WTC11 (cell line): ENCODE measurements at regions of chr19 and their contacts with region 1.

Region 1: DNA sequence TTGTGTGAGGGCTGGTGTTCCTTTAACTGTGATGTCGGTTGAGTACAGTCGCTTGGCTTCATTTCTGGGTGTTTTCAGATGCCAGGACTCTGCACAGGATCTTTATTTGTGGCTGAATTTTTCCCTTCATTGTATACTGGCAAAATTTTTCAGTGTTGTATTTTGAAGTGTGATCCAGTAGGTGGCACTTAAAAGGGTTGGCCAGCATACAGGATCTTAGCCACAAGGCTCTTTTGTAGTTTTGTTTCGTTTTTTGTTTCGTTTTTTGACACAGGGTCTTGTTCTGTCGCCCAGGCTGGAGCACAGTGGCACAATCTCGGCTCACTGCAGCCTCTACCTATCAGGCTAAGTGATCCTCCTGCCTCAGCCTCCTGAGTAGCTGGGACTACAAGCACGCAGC is 8.7 kb downstream of the FCAR start:
- DNase-seq: no peak
- ATAC-seq: no peak
- H3K4me3 Mint-ChIP-seq: no peak overlapping the region
- H3K27ac Mint-ChIP-seq: no peak overlapping the region
- H3K4me1 Mint-ChIP-seq: peaks cover 26% of the 10 kb centered on the region
- H3K27me3 Mint-ChIP-seq: peaks cover 18% of the 10 kb centered on the region
- CTCF ChIP-seq: no peak

Region 2: DNA sequence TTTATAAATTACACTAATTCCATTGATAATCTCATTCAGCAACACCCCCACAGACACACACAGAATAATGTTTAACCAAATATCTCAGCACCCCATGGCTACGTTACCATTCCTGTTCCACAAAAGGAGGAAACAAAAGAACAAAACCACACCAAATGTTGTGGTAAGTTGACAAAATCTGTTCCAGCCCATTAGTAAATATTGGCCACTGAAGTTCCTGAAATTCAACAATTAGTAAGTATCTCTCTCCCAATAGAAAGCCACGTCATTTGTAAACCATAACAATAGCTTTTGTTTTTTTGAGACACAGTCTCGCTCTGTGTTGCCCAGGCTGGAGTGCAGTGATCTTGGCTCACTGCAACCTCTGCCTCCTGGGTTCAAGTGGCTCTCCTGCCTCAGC is 11.1 kb before region 1 on chr19:
- CTCF ChIA-PET with region 1: interaction called, 11 read pairs
- POLR2A ChIA-PET with region 1: no interaction called
- DNase-seq: no peak
- ATAC-seq: no peak
- H3K4me3 Mint-ChIP-seq: no peak overlapping the region
- H3K27ac Mint-ChIP-seq: no peak overlapping the region
- H3K4me1 Mint-ChIP-seq: peaks cover 18% of the 10 kb centered on the region
- H3K27me3 Mint-ChIP-seq: peaks cover 16% of the 10 kb centered on the region
- CTCF ChIP-seq: no peak

Region 3: DNA sequence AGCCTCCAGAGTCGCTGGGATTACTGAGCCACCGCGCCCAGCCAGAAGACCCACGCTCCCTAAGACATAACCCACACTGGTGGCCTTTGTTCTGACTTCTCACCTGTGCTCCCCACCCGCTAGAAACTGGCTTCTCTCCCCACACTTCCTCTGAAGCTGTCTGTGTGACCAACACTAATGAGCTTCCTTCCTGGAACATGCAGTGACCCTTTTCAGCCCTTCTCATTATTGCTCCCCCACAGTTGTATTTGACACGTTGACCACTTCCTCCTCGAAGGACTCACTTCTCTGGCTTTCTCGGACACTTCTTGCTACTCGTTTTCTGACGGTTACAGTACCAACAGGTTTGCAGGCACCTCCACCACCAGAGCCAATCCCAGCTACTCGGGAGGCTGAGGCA is 34.1 kb after region 1 on chr19:
- CTCF ChIA-PET with region 1: interaction called, 166 read pairs
- POLR2A ChIA-PET with region 1: no interaction called
- DNase-seq: no peak
- ATAC-seq: no peak
- H3K4me3 Mint-ChIP-seq: no peak overlapping the region
- H3K27ac Mint-ChIP-seq: peak overlapping the region; percentile 11; the same call in 1 of the 2 replicates
- H3K4me1 Mint-ChIP-seq: peaks cover 9% of the 10 kb centered on the region
- H3K27me3 Mint-ChIP-seq: no peaks in the 10 kb centered on the region
- CTCF ChIP-seq: no peak

Region 4: GRCh38 chr19:55005684-55006488 is 123.1 kb after region 1 on chr19:
- CTCF ChIA-PET with region 1: interaction called, 12 read pairs
- POLR2A ChIA-PET with region 1: no interaction called
- DNase-seq: no peak
- ATAC-seq: no peak
- H3K4me3 Mint-ChIP-seq: peak overlapping the region; percentile 63
- H3K27ac Mint-ChIP-seq: peak overlapping the region; percentile 80
- H3K4me1 Mint-ChIP-seq: peaks cover 69% of the 10 kb centered on the region
- H3K27me3 Mint-ChIP-seq: peaks cover 13% of the 10 kb centered on the region
- CTCF ChIP-seq: no peak

Region 5: GRCh38 chr19:55062734-55063492 is 180.2 kb after region 1 on chr19 and contains the start of gene RDH13:
- CTCF ChIA-PET with region 1: interaction called, 31 read pairs
- POLR2A ChIA-PET with region 1: no interaction called
- DNase-seq: peak; percentile 99
- ATAC-seq: peak; percentile 98
- H3K4me3 Mint-ChIP-seq: peak within 1 kb of the TSS; percentile 97
- H3K27ac Mint-ChIP-seq: no peak within 1 kb of the TSS
- H3K4me1 Mint-ChIP-seq: peaks cover 17% of the 10 kb centered on the region
- H3K27me3 Mint-ChIP-seq: peaks cover 46% of the 10 kb centered on the region
- CTCF ChIP-seq: no peak
- total RNA-seq, gene RDH13: 35.3 to 39.5 TPM (median 38.4 TPM) in 3 replicates

Region 6: DNA sequence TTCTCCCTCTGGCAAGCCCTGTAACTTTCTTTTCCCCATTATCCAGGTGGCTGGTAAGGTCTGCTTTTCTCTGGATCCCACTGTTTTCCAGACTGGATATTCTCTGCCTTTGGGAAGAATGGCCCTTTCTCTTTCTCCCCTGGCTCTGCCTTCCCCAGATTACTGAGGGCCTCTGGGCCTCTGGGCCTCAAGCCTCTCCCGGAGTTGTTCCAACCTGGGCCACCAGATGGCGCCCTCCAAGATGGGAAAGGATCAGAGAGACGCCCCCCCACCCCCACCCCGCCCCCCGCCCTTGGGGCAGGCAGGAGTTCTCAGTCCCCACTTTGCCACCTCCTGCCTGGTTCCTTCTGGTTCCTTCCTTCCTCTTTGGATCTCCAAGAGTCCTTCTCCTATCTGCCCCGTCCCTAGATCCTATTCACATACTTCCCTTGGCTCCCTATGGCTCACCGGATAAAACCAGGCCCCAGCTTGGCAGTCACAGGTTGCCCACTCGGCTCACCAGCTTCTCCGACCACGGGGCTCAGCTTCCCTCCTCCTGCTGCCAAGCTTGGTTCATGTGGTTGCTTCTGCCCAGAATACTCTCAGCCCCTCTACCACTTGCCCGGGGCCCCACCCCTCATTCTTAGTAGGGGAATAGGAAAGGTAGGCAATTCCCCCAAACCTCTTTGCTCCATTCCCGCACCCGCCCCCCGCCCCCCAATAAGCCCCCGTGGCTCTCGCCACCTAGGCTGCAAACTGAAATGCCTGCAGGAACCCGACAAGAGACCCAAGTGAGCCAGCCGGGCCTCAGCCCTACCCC is 206.0 kb after region 1 on chr19:
- CTCF ChIA-PET with region 1: interaction called, 46 read pairs
- POLR2A ChIA-PET with region 1: interaction called, 4 read pairs
- DNase-seq: peak; percentile 97
- ATAC-seq: no peak
- H3K4me3 Mint-ChIP-seq: peak overlapping the region; percentile 88
- H3K27ac Mint-ChIP-seq: peak overlapping the region; percentile 76
- H3K4me1 Mint-ChIP-seq: peaks cover 43% of the 10 kb centered on the region
- H3K27me3 Mint-ChIP-seq: peaks cover 38% of the 10 kb centered on the region
- CTCF ChIP-seq: peak; percentile 95